AG04449 (cell line): ENCODE measurements at regions of chr6 and their contacts with region 1.

Region 1: DNA sequence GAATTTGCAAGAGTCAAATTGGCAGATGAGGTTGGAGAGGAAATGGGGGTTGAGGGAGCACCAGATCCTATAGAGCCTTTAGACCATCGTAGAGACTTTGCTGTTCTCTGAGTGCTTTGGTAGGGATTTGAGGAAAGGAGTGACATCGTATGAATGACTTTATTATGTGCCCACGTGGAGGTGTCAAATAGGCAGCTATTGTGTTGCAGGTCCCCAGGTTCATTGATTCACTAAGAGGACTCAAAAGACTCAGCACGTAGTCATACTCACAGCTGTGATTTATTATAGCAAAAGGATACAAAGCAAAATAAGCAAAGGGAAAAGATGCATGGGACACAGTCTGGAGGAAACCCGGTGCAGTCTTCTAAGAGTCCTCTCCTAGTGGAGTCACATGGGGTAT is 2.2 kb downstream of the MTRES1 start:
- DNase-seq: no peak
- H3K4me3 ChIP-seq: no peak overlapping the region
- CTCF ChIP-seq: no peak

Region 2: GRCh38 chr6:106918115-106918514 is 112.0 kb before region 1 on chr6:
- CTCF ChIA-PET with region 1: no interaction called
- POLR2A ChIA-PET with region 1: no interaction called
- DNase-seq: no peak
- H3K4me3 ChIP-seq: no peak overlapping the region
- CTCF ChIP-seq: no peak

Region 3: GRCh38 chr6:107045826-107046613 is 15.9 kb after region 1 on chr6:
- CTCF ChIA-PET with region 1: interaction called, 38 read pairs
- POLR2A ChIA-PET with region 1: interaction called, 4 read pairs
- DNase-seq: no peak
- H3K4me3 ChIP-seq: no peak overlapping the region
- CTCF ChIP-seq: no peak